IMR-90 (cell line): ENCODE measurements at regions of chr5 and their contacts with region 1.

Region 1: DNA sequence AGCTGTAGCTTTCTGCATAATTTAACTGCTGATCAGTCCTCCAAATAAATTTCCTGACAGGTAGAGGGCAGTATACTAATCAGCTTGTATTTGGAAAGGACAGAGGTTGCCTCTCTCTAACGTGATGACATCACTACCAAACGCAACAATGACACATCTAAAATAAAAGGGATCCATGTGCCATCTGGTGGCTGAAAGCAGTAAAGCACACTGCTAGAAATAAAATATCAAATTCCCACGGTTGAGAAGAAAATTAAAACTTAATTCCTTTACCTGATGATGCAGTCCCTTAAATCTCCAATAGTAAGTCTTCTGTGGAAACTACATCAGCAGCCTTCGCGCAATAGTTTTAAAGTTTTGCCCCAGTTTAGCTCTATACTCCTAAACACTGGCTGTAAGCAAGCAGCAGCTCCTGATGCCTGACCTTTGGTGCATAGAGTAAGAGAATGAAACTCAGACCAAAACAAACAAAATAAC is 54.5 kb downstream of the DIAPH1 start:
- DNase-seq: peak; percentile 97
- ATAC-seq: peak; percentile 71
- H3K4me3 ChIP-seq: no peak overlapping the region
- H3K27ac ChIP-seq: no peak overlapping the region
- H3K4me1 ChIP-seq: peaks cover 4% of the 10 kb centered on the region; the same call in 1 of the 2 replicates
- H3K27me3 ChIP-seq: no peaks in the 10 kb centered on the region
- CTCF ChIP-seq: peak; percentile 99
- POLR2A ChIP-seq: no peak
- RAD21 ChIP-seq: peak; percentile 75

Region 2: GRCh38 chr5:141094481-141095262 is 469.6 kb before region 1 on chr5 and contains the start of gene PCDHB2:
- CTCF ChIA-PET with region 1: no interaction called
- POLR2A ChIA-PET with region 1: no interaction called
- dilution Hi-C with region 1: no loop called
- in situ Hi-C with region 1: no loop called
- intact Hi-C with region 1: loop called (anchors 5 kb)
- DNase-seq: peak; percentile 14
- ATAC-seq: peak; percentile 53
- H3K4me3 ChIP-seq: peak within 1 kb of the TSS; percentile 86
- H3K27ac ChIP-seq: peak within 1 kb of the TSS; percentile 74; the same call in 1 of the 2 replicates
- H3K4me1 ChIP-seq: no peaks in the 10 kb centered on the region
- H3K27me3 ChIP-seq: no peaks in the 10 kb centered on the region
- CTCF ChIP-seq: peak; percentile 29
- POLR2A ChIP-seq: no peak
- RAD21 ChIP-seq: no peak
- total RNA-seq, gene PCDHB2: 0.36 and 0.56 TPM in 2 replicates

Region 3: GRCh38 chr5:141223112-141223783 is 341.0 kb before region 1 on chr5 and contains the start of gene PCDHB14:
- CTCF ChIA-PET with region 1: interaction called, 8 read pairs
- POLR2A ChIA-PET with region 1: no interaction called
- dilution Hi-C with region 1: no loop called
- in situ Hi-C with region 1: no loop called
- intact Hi-C with region 1: loop called (anchors 1 kb)
- DNase-seq: peak; percentile 20
- ATAC-seq: peak; percentile 69
- H3K4me3 ChIP-seq: peak within 1 kb of the TSS; percentile 48
- H3K27ac ChIP-seq: no peak within 1 kb of the TSS
- H3K4me1 ChIP-seq: no peaks in the 10 kb centered on the region
- H3K27me3 ChIP-seq: no peaks in the 10 kb centered on the region
- CTCF ChIP-seq: peak; percentile 34
- POLR2A ChIP-seq: no peak
- RAD21 ChIP-seq: peak; percentile 33
- total RNA-seq, gene PCDHB14: 0.18 and 0.28 TPM in 2 replicates

Region 4: GRCh38 chr5:141326088-141326854 is 238.0 kb before region 1 on chr5:
- CTCF ChIA-PET with region 1: interaction called, 8 read pairs
- POLR2A ChIA-PET with region 1: interaction called, 3 read pairs
- dilution Hi-C with region 1: no loop called
- in situ Hi-C with region 1: loop called (anchors 5 kb)
- intact Hi-C with region 1: loop called (anchors 1 kb)
- DNase-seq: peak; percentile 82
- ATAC-seq: peak; percentile 98
- H3K4me3 ChIP-seq: peak overlapping the region; percentile 85
- H3K27ac ChIP-seq: peak overlapping the region; percentile 96
- H3K4me1 ChIP-seq: no peaks in the 10 kb centered on the region
- H3K27me3 ChIP-seq: no peaks in the 10 kb centered on the region
- CTCF ChIP-seq: peak; percentile 81
- POLR2A ChIP-seq: peak; percentile 53; the same call in 1 of the 2 replicates
- RAD21 ChIP-seq: peak; percentile 64

Region 5: GRCh38 chr5:141412854-141413539 is 151.3 kb before region 1 on chr5 and contains the start of gene PCDHGA10:
- CTCF ChIA-PET with region 1: interaction called, 34 read pairs
- POLR2A ChIA-PET with region 1: interaction called, 4 read pairs
- dilution Hi-C with region 1: no loop called
- in situ Hi-C with region 1: loop called (anchors 5 kb)
- intact Hi-C with region 1: loop called (anchors 1 kb)
- DNase-seq: peak; percentile 80
- ATAC-seq: peak; percentile 77
- H3K4me3 ChIP-seq: peak within 1 kb of the TSS; percentile 55
- H3K27ac ChIP-seq: peak within 1 kb of the TSS; percentile 65; the same call in 1 of the 2 replicates
- H3K4me1 ChIP-seq: no peaks in the 10 kb centered on the region
- H3K27me3 ChIP-seq: no peaks in the 10 kb centered on the region
- CTCF ChIP-seq: peak; percentile 70
- POLR2A ChIP-seq: no peak
- RAD21 ChIP-seq: peak; percentile 61
- total RNA-seq, gene PCDHGA10: 6.6 and 6.9 TPM in 2 replicates

Region 6: GRCh38 chr5:141532726-141533125 is 31.5 kb before region 1 on chr5:
- CTCF ChIA-PET with region 1: no interaction called
- POLR2A ChIA-PET with region 1: no interaction called
- dilution Hi-C with region 1: no loop called
- in situ Hi-C with region 1: no loop called
- intact Hi-C with region 1: no loop called
- DNase-seq: no peak
- ATAC-seq: no peak
- H3K4me3 ChIP-seq: no peak overlapping the region
- H3K27ac ChIP-seq: no peak overlapping the region
- H3K4me1 ChIP-seq: peaks cover 17% of the 10 kb centered on the region
- H3K27me3 ChIP-seq: no peaks in the 10 kb centered on the region
- CTCF ChIP-seq: no peak
- POLR2A ChIP-seq: no peak
- RAD21 ChIP-seq: no peak

Region 7: GRCh38 chr5:141628175-141628788 is 64.0 kb after region 1 on chr5:
- CTCF ChIA-PET with region 1: no interaction called
- POLR2A ChIA-PET with region 1: no interaction called
- dilution Hi-C with region 1: no loop called
- in situ Hi-C with region 1: no loop called
- intact Hi-C with region 1: no loop called
- DNase-seq: peak; percentile 69
- ATAC-seq: peak; percentile 65
- H3K4me3 ChIP-seq: no peak overlapping the region
- H3K27ac ChIP-seq: no peak overlapping the region
- H3K4me1 ChIP-seq: peaks cover 4% of the 10 kb centered on the region
- H3K27me3 ChIP-seq: no peaks in the 10 kb centered on the region
- CTCF ChIP-seq: no peak
- POLR2A ChIP-seq: no peak
- RAD21 ChIP-seq: no peak